ENCODE measurements at regions of chr12 and their contacts with region 1.

Region 1: DNA sequence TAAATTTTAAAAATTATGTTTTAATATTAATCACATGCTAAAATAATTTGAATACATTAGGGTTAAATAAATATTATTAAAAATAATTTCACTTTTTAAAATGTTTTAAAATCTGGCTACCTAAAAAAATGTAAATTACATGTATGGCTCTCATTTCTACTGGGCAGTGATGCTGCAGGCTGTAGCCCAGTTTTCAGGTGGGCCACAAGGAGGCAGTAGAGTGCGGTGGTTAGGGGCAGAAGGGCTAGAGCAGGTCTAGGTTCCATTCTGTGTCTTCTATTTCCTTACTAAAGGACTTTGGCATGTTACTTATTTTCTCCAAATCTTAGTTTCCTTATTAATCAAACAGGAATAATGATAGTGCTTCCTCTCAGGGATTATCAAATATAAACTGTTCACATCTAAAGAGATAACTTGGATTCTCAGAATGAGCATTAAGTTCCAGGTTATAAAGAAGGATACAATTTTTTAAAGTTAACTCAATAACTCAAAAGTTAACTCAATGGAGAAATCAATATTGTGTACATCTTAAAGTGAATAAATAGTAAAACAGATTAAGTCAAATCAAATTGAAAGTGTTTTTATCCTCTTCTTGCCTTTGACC is 54.9 kb upstream of the OVCH1 start:
- DNase-seq: no peak
- ATAC-seq: peak; percentile 98
- H3K4me3 ChIP-seq: no peak overlapping the region
- H3K27ac ChIP-seq: no peak overlapping the region
- H3K4me1 ChIP-seq: no peaks in the 10 kb centered on the region
- H3K27me3 ChIP-seq: no peaks in the 10 kb centered on the region
- CTCF ChIP-seq: peak; percentile 84 to 90 (median 87)
- EP300 ChIP-seq: no peak
- POLR2A ChIP-seq: no peak
- RAD21 ChIP-seq: peak; percentile 79

Region 2: DNA sequence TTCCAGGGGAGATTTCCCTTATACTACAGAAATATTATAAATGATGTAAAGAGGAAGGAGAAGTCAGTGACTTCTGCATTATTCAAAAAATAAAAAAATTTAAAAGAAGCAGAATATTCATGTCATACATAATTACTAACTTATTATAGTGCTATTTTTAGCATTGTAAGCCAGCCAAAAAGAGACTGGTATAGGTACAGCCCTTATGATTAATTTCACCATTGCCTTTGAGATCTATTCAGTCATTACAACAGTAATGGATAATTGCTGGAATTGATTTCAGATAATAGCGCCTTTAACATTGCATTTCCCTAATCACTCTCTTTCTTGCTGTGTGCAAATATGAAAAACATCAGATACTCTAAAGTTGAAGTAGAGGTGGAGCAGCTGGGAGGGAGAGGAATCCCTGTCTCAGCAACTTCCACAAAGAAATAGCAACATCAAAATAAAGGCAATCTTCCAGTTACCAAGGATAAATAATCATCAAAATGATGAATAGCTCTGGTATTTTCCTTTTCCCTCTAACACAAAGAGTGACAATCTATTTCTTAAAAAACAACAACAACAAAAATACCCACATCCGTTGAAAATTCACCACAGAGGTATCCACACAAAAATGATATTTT is 16.8 kb after region 1 on chr12:
- CTCF ChIA-PET with region 1: interaction called, 16 read pairs
- POLR2A ChIA-PET with region 1: no interaction called
- RAD21 ChIA-PET with region 1: interaction called, 6 read pairs
- SMC1A ChIA-PET with region 1: interaction called, 9 read pairs
- in situ Hi-C with region 1: no loop called
- intact Hi-C with region 1: no loop called
- DNase-seq: no peak
- ATAC-seq: no peak
- H3K4me3 ChIP-seq: no peak overlapping the region
- H3K27ac ChIP-seq: no peak overlapping the region
- H3K4me1 ChIP-seq: no peaks in the 10 kb centered on the region
- H3K27me3 ChIP-seq: no peaks in the 10 kb centered on the region
- CTCF ChIP-seq: no peak
- EP300 ChIP-seq: no peak
- POLR2A ChIP-seq: no peak
- RAD21 ChIP-seq: no peak

Region 3: DNA sequence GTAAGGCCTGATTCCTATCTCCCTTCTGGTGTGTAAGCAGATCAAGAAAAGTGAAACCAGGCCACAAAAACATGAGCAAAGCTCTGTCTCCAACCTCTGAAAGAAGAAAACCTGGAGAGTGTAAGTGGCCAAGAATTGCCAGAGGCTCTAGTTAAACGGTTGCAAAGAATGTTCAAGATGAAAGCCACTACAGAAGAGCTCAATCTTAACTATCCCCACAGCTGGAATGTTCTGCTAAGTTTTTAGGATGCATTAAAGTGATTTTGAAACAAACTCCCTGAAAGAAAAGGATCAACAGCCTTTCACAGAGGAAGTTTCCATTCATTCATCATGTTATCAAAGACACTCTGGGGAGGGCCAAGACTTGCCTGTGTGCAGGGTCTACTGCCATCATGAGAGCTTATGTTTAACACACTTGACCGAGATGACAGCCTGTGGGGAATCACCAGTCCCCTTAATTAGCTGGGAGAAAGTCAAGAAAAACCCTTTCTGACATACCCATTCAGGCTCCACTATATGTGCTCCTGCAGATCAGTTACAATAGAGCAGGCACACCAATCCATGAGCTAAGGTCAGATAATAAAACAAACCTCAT is 73.0 kb after region 1 on chr12:
- CTCF ChIA-PET with region 1: interaction called, 8 read pairs
- POLR2A ChIA-PET with region 1: no interaction called
- RAD21 ChIA-PET with region 1: interaction called, 18 read pairs
- SMC1A ChIA-PET with region 1: interaction called, 5 read pairs
- in situ Hi-C with region 1: no loop called
- intact Hi-C with region 1: no loop called
- DNase-seq: peak; percentile 16
- ATAC-seq: peak; percentile 83
- H3K4me3 ChIP-seq: no peak overlapping the region
- H3K27ac ChIP-seq: no peak overlapping the region
- H3K4me1 ChIP-seq: no peaks in the 10 kb centered on the region
- H3K27me3 ChIP-seq: no peaks in the 10 kb centered on the region
- CTCF ChIP-seq: no peak
- EP300 ChIP-seq: no peak
- POLR2A ChIP-seq: no peak
- RAD21 ChIP-seq: no peak

Region 4: DNA sequence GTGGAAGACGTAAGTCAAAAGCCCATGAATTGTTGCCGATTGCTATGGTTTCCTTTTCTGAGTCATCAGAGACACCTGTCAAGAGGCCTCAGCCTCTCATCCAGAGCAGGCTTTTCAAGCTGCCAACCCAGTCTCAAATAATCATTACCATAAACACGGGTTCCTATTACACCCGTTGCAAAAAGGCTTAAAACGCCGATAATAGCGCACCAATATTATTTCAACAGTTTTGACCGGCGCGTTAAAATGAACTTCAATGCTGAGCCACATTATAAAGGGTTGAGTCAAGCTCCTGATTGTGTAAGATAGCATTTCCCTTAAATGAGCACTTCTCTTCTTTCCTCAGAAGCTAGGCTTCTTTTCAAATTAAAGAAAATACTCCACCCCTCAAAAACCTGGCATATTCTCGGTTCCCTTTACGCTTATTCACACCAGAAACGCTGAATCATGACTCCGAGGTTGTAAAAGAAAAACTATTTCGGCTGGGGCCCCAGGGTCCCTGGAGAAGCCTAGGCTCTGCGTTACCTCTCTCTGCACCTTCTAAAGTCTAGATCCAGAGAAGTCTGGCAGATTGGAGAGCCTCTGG is 230.0 kb after region 1 on chr12:
- CTCF ChIA-PET with region 1: interaction called, 9 read pairs
- POLR2A ChIA-PET with region 1: interaction called, 5 read pairs
- RAD21 ChIA-PET with region 1: interaction called, 7 read pairs
- SMC1A ChIA-PET with region 1: interaction called, 12 read pairs
- in situ Hi-C with region 1: no loop called
- intact Hi-C with region 1: loop called (anchors 2 kb)
- DNase-seq: no peak
- ATAC-seq: peak; percentile 80
- H3K4me3 ChIP-seq: peak overlapping the region; percentile 50
- H3K27ac ChIP-seq: no peak overlapping the region
- H3K4me1 ChIP-seq: no peaks in the 10 kb centered on the region
- H3K27me3 ChIP-seq: no peaks in the 10 kb centered on the region
- CTCF ChIP-seq: no peak
- EP300 ChIP-seq: peak in 1 of 2 experiments; percentile 29; a peak in 1 of 4 replicates
- POLR2A ChIP-seq: no peak
- RAD21 ChIP-seq: no peak

Region 5: DNA sequence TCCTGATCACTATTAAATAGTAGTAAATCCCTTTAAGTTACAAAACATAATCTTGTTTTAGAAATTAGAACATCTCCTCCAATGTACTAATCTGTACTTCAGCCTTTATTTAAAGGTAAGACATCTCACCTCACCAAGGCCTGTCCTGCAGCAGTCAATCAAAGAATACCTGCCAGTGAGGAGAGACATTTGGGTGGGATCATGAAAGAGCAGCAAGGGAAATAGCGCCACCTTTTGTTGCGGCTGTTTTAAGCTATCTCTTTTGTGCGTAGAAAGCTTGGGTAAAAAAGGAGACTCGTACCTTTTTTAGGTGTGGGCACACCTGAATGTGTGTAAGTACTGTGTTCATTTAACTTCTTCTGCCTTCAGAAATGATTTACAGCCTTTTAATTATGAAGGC is 349.2 kb after region 1 on chr12:
- CTCF ChIA-PET with region 1: interaction called, 71 read pairs
- POLR2A ChIA-PET with region 1: no interaction called
- RAD21 ChIA-PET with region 1: interaction called, 30 read pairs
- SMC1A ChIA-PET with region 1: interaction called, 64 read pairs
- in situ Hi-C with region 1: no loop called
- intact Hi-C with region 1: loop called (anchors 2 kb)
- DNase-seq: no peak
- ATAC-seq: no peak; the same call in 2 of the 3 replicates
- H3K4me3 ChIP-seq: no peak overlapping the region
- H3K27ac ChIP-seq: no peak overlapping the region
- H3K4me1 ChIP-seq: no peaks in the 10 kb centered on the region
- H3K27me3 ChIP-seq: no peaks in the 10 kb centered on the region
- CTCF ChIP-seq: peak in 1 of 3 experiments; percentile 38; a peak in 1 of 6 replicates
- EP300 ChIP-seq: no peak
- POLR2A ChIP-seq: no peak
- RAD21 ChIP-seq: no peak

Region 6: GRCh38 chr12:30286345-30286926 is 734.0 kb after region 1 on chr12:
- CTCF ChIA-PET with region 1: no interaction called
- POLR2A ChIA-PET with region 1: no interaction called
- RAD21 ChIA-PET with region 1: no interaction called
- SMC1A ChIA-PET with region 1: no interaction called
- in situ Hi-C with region 1: no loop called
- intact Hi-C with region 1: loop called (anchors 1 kb)
- DNase-seq: no peak
- ATAC-seq: peak; percentile 72
- H3K4me3 ChIP-seq: no peak overlapping the region
- H3K27ac ChIP-seq: no peak overlapping the region
- H3K4me1 ChIP-seq: no peaks in the 10 kb centered on the region
- H3K27me3 ChIP-seq: no peaks in the 10 kb centered on the region
- CTCF ChIP-seq: peak; percentile 24 to 52 (median 24); a peak in 3 of 6 replicates
- EP300 ChIP-seq: no peak
- POLR2A ChIP-seq: no peak
- RAD21 ChIP-seq: peak; percentile 57

Region 7: GRCh38 chr12:30847259-30847658 is 1294.8 kb after region 1 on chr12:
- CTCF ChIA-PET with region 1: interaction called, 3 read pairs
- POLR2A ChIA-PET with region 1: no interaction called
- RAD21 ChIA-PET with region 1: no interaction called
- SMC1A ChIA-PET with region 1: interaction called, 3 read pairs
- in situ Hi-C with region 1: no loop called
- intact Hi-C with region 1: loop called (anchors 10 kb)
- DNase-seq: peak; percentile 28
- ATAC-seq: peak; percentile 53
- H3K4me3 ChIP-seq: no peak overlapping the region
- H3K27ac ChIP-seq: no peak overlapping the region
- H3K4me1 ChIP-seq: peaks cover 3% of the 10 kb centered on the region
- H3K27me3 ChIP-seq: no peaks in the 10 kb centered on the region
- CTCF ChIP-seq: peak; percentile 58 to 72 (median 60); a peak in 5 of 6 replicates
- EP300 ChIP-seq: no peak
- POLR2A ChIP-seq: no peak
- RAD21 ChIP-seq: peak; percentile 91

Measured in GM12878 (cell line).